ENCODE measurements at regions of chr2 and their contacts with region 1.

Region 1: DNA sequence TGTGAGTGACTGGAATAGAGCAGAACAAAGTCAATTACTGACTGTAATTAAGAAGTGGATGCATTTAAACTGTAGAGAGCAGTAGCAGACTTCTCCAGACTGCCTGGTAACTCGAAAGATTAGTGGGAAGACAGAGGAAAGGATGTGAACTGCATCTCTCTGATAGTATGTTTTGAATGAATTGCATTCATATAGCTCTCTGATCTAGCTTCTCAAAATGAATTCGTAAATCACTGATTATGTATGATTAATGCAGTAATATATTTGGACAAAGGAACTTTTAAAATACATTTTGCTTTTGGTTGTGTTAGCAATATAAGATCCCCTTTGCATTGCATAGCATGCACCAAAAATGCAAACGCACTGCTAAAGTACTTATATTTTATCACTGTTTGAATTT is 304.0 kb downstream of the ARHGAP15 start:
- DNase-seq: no peak
- ATAC-seq: peak in 1 of 4 donors; percentile 59
- H3K4me3 ChIP-seq: no peak overlapping the region
- H3K27ac ChIP-seq: peak overlapping the region in 1 of 12 donors; percentile 10
- H3K4me1 ChIP-seq: peaks cover 0 to 15% (median 0%) of the 10 kb centered on the region in 12 donors
- H3K27me3 ChIP-seq: no peaks in the 10 kb centered on the region
- CTCF ChIP-seq: peak in 8 of 12 donors; percentile 9 to 47 (median 31)
- POLR2A ChIP-seq: no peak

Region 2: DNA sequence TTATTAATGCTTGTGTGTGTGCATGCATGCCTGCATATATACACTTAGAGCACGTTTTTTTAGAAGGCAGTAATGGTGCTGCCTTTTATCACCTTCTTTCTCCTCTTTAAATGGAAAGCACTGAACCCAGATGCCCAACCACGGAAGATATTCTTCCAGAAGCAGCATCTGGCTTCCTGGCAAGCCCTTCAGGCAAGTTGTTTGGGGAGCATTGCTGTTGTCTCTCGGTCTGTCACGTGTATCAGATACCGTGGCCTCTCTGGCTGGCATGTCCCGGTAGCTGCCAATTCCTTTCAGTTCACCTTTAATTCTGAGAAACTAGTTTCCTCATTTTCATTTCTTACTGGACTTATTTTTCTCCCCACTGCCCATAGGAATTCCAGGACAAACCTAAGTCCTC is 283.8 kb after region 1 on chr2:
- intact Hi-C with region 1: loop called in 1 of 10 experiments (anchors 10 kb)
- DNase-seq: no peak
- ATAC-seq: no peak
- H3K4me3 ChIP-seq: peak overlapping the region in 9 of 12 donors; percentile 0 to 33 (median 14)
- H3K27ac ChIP-seq: peak overlapping the region in 1 of 12 donors; percentile 15
- H3K4me1 ChIP-seq: peaks cover 0 to 10% (median 3%) of the 10 kb centered on the region in 12 donors
- H3K27me3 ChIP-seq: no peaks in the 10 kb centered on the region
- CTCF ChIP-seq: no peak
- POLR2A ChIP-seq: no peak

Measured in heart left ventricle (tissue), 16 donors.